A549 (cell line): ENCODE measurements at regions of chr11 and their contacts with region 1.

Region 1: GRCh38 chr11:59207988-59208451 is 4.7 kb downstream of the MPEG1 start:
- DNase-seq: peak; percentile 17 to 65
- ATAC-seq: peak; percentile 62 to 75; a peak in 5 of 6 replicates
- H3K4me3 ChIP-seq: no peak overlapping the region
- H3K27ac ChIP-seq: no peak overlapping the region
- H3K4me1 ChIP-seq: no peaks in the 10 kb centered on the region
- CTCF ChIP-seq: peak; percentile 68
- EP300 ChIP-seq: no peak
- POLR2A ChIP-seq: no peak
- RAD21 ChIP-seq: peak; percentile 64 to 70

Region 2: DNA sequence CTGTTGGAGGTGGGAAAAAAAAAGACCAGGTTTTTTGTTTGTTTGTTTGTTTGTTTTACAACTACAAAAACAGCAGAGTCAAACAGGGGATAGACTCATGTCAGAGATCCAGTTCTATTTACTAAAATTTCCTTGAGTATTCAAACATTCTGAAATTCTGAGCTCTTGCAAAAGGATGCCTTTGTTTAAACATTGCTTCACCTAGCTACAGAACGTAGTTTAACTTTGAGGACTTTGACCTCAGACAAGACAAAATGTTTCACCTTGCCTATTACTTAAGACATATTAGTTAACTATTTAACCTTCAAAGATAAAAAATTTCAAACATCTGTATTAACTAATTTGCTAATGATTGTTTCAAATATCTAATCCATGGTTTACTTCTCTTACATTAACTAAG is 327.4 kb before region 1 on chr11:
- CTCF ChIA-PET with region 1: no interaction called
- POLR2A ChIA-PET with region 1: no interaction called
- DNase-seq: peak in 1 of 2 experiments; percentile 7
- ATAC-seq: no peak
- H3K4me3 ChIP-seq: no peak overlapping the region
- H3K27ac ChIP-seq: no peak overlapping the region
- H3K4me1 ChIP-seq: no peaks in the 10 kb centered on the region
- CTCF ChIP-seq: no peak
- EP300 ChIP-seq: no peak
- POLR2A ChIP-seq: no peak
- RAD21 ChIP-seq: no peak

Region 3: GRCh38 chr11:59102259-59102765 is 105.7 kb before region 1 on chr11:
- CTCF ChIA-PET with region 1: no interaction called
- POLR2A ChIA-PET with region 1: no interaction called
- DNase-seq: peak; percentile 57 to 78
- ATAC-seq: peak; percentile 60 to 69
- H3K4me3 ChIP-seq: peak overlapping the region; percentile 49
- H3K27ac ChIP-seq: peak overlapping the region; percentile 44 to 46; a peak in 2 of 6 replicates
- H3K4me1 ChIP-seq: peaks cover 8% of the 10 kb centered on the region; the same call in 2 of the 3 replicates
- CTCF ChIP-seq: peak; percentile 29; the same call in 2 of the 3 replicates
- EP300 ChIP-seq: no peak
- POLR2A ChIP-seq: no peak
- RAD21 ChIP-seq: peak; percentile 39 to 56; a peak in 4 of 5 replicates

Region 4: DNA sequence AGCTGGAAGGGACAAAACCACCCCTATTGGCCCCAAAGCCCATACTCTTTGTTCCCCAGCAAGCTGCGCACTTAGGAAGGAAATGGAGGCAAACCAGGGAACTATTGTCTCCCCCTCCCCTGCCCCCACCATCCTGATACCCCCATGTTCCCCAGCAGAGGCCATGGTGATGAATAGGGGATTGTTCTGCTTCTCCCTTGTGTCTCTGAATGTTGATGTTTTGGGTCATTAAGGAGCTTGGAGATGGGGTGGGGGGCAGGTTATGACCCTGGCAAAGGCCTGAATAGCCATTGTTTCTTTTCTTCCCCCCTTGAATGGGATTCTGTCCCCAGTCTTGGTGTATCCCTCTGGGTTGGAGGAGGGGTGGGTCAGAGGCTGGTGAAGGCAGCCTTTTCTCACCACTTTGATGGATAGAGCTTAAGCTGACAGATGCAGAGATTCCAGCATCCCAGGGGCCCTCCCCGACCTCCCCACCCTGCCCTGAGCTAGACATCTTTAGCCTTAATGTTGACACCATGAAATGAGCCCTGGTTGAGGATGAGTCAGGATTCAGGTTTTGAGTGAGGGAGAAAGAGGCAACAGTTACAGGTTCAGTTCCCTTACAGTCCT is 27.7 kb before region 1 on chr11:
- CTCF ChIA-PET with region 1: interaction called, 161 read pairs
- POLR2A ChIA-PET with region 1: no interaction called
- DNase-seq: no peak
- ATAC-seq: no peak
- H3K4me3 ChIP-seq: no peak overlapping the region
- H3K27ac ChIP-seq: no peak overlapping the region
- H3K4me1 ChIP-seq: peaks cover 4% of the 10 kb centered on the region; the same call in 2 of the 3 replicates
- CTCF ChIP-seq: no peak
- EP300 ChIP-seq: no peak
- POLR2A ChIP-seq: no peak
- RAD21 ChIP-seq: no peak

Region 5: DNA sequence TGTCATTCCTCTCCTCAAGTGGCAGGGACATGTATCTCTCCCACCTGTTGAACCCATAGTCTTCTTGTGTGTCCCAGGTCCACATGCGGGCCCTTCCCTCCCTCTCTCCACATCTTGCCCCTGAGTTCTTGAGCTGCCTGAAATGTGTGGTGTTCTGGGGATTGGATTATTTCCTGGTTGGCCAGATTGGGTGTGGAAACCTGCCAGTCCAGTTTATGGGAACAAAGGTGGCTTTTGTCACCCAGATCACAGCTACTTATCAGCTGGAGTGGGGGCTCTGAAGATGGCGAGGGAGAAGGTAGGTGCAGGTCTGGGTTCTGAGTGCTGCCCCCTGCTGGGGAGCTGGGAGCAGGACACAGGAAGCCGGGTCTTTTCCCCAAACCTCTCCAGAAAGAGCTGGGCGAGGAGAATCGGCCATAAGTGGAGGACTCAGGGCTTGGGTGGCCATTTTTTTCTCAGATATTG is 21.9 kb before region 1 on chr11:
- CTCF ChIA-PET with region 1: interaction called, 15 read pairs
- POLR2A ChIA-PET with region 1: no interaction called
- DNase-seq: peak; percentile 24 to 41
- ATAC-seq: peak in 1 of 2 experiments; percentile 87; a peak in 3 of 6 replicates
- H3K4me3 ChIP-seq: no peak overlapping the region
- H3K27ac ChIP-seq: no peak overlapping the region
- H3K4me1 ChIP-seq: peaks cover 5% of the 10 kb centered on the region; the same call in 1 of the 3 replicates
- CTCF ChIP-seq: peak; percentile 33; the same call in 2 of the 3 replicates
- EP300 ChIP-seq: no peak
- POLR2A ChIP-seq: no peak
- RAD21 ChIP-seq: no peak

Region 6: GRCh38 chr11:59191890-59192289 is 16.1 kb before region 1 on chr11:
- CTCF ChIA-PET with region 1: interaction called, 15 read pairs
- POLR2A ChIA-PET with region 1: no interaction called
- DNase-seq: no peak
- ATAC-seq: no peak
- H3K4me3 ChIP-seq: no peak overlapping the region
- H3K27ac ChIP-seq: no peak overlapping the region
- H3K4me1 ChIP-seq: 0 out of 3 replicates have a peak, but pooled peaks cover 5% of the 10 kb centered on the region
- CTCF ChIP-seq: no peak
- EP300 ChIP-seq: no peak
- POLR2A ChIP-seq: no peak
- RAD21 ChIP-seq: no peak

Region 7: GRCh38 chr11:59224351-59224928 is 16.4 kb after region 1 on chr11:
- CTCF ChIA-PET with region 1: interaction called, 11 read pairs
- POLR2A ChIA-PET with region 1: no interaction called
- DNase-seq: no peak
- ATAC-seq: no peak; a peak in 2 of 6 replicates
- H3K4me3 ChIP-seq: no peak overlapping the region
- H3K27ac ChIP-seq: no peak overlapping the region
- H3K4me1 ChIP-seq: peaks cover 18% of the 10 kb centered on the region
- CTCF ChIP-seq: no peak
- EP300 ChIP-seq: no peak
- POLR2A ChIP-seq: no peak
- RAD21 ChIP-seq: no peak